ENCODE measurements at regions of chr1 and their contacts with region 1.

Region 1: GRCh38 chr1:43171876-43172526 is at the starts of genes CFAP57 and EBNA1BP2:
- DNase-seq: peak; percentile 93 to 95 (median 94)
- H3K4me3 ChIP-seq: peak within 1 kb of the TSS; percentile 81 to 87
- H3K4me3 Mint-ChIP-seq: peak within 1 kb of the TSS; percentile 94 to 100 (median 99)
- H3K27ac ChIP-seq: peak within 1 kb of the TSS; percentile 62
- H3K27ac Mint-ChIP-seq: peak within 1 kb of the TSS; percentile 84 to 99 (median 96)
- H3K4me1 ChIP-seq: peaks cover 21% of the 10 kb centered on the region
- H3K4me1 Mint-ChIP-seq: peaks cover 22 to 31% (median 26%) of the 10 kb centered on the region in 4 donors
- H3K27me3 ChIP-seq: peaks cover 10% of the 10 kb centered on the region
- H3K27me3 Mint-ChIP-seq: peaks cover 13 to 15% of the 10 kb centered on the region in 2 donors
- total RNA-seq, gene CFAP57: not detected
- total RNA-seq, gene EBNA1BP2: 23.6 to 27.6 TPM

Region 2: DNA sequence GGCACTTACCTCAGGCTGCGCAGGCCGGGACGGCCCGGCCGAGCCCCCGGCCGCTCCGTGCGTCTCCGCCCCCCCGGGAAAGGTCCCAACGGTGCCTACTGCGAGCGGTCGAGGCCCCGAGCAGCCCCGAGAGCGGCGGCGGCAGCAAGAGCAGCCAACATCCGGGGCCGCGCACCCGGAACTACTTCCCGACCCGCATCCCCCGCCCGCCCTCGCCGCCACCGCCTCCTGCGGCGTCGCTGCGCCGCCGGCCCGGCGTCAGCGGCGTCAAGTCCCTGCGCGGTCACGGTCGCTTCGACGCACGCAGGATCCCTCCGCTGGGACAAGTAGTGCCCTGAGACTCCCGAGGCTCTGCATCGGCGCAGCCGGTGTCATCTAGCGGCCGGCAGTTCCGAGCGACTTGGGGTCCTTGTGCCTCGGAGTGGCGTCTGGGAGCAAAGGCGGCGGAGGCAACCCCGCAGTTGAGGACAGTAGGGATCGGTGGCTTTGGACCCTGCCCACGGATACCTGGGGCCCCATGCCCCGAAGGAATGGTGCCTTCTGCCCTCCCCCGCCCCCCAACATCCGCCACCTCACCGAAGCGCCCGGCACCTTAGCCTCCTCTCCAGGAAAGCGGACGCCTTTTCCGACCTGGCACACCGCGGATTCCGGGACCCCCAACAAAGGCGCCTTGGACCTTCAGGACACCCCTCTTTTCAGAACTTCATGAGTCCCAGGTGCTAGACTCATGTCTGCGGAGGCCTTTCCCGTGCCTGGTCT is 836.8 kb before region 1 on chr1 and contains the start of gene FOXJ3:
- CTCF ChIA-PET with region 1: no interaction called
- POLR2A ChIA-PET with region 1: no interaction called
- intact Hi-C with region 1: loop called (anchors 10 kb)
- DNase-seq: peak; percentile 89 to 91 (median 90)
- H3K4me3 ChIP-seq: peak within 1 kb of the TSS; percentile 62 to 92
- H3K4me3 Mint-ChIP-seq: peak within 1 kb of the TSS; percentile 93 to 97 (median 95)
- H3K27ac ChIP-seq: peak within 1 kb of the TSS; percentile 83
- H3K27ac Mint-ChIP-seq: peak within 1 kb of the TSS; percentile 94 to 96 (median 95)
- H3K4me1 ChIP-seq: peaks cover 41% of the 10 kb centered on the region
- H3K4me1 Mint-ChIP-seq: peaks cover 33 to 54% (median 44%) of the 10 kb centered on the region in 4 donors
- H3K27me3 ChIP-seq: no peaks in the 10 kb centered on the region
- H3K27me3 Mint-ChIP-seq: no peaks in the 10 kb centered on the region
- total RNA-seq, gene FOXJ3: 97.4 to 102 TPM

Region 3: GRCh38 chr1:42657971-42658879 is 513.8 kb before region 1 on chr1 and contains the start of gene PPIH:
- CTCF ChIA-PET with region 1: no interaction called
- POLR2A ChIA-PET with region 1: no interaction called
- intact Hi-C with region 1: loop called (anchors 1 kb)
- DNase-seq: peak; percentile 92 to 96 (median 93)
- H3K4me3 ChIP-seq: peak within 1 kb of the TSS; percentile 81 to 89
- H3K4me3 Mint-ChIP-seq: peak within 1 kb of the TSS; percentile 94 to 100 (median 98)
- H3K27ac ChIP-seq: peak within 1 kb of the TSS; percentile 65
- H3K27ac Mint-ChIP-seq: peak within 1 kb of the TSS; percentile 94 to 98 (median 95)
- H3K4me1 ChIP-seq: peaks cover 26% of the 10 kb centered on the region
- H3K4me1 Mint-ChIP-seq: peaks cover 21 to 47% (median 35%) of the 10 kb centered on the region in 4 donors
- H3K27me3 ChIP-seq: no peaks in the 10 kb centered on the region
- H3K27me3 Mint-ChIP-seq: no peaks in the 10 kb centered on the region
- total RNA-seq, gene PPIH: 40.5 to 42.9 TPM

Region 4: GRCh38 chr1:42846257-42847110 is 325.5 kb before region 1 on chr1 and contains the start of gene ZNF691:
- CTCF ChIA-PET with region 1: no interaction called
- POLR2A ChIA-PET with region 1: no interaction called
- intact Hi-C with region 1: loop called (anchors 1 kb)
- DNase-seq: peak; percentile 88 to 94 (median 89)
- H3K4me3 ChIP-seq: peak within 1 kb of the TSS; percentile 74 to 84
- H3K4me3 Mint-ChIP-seq: peak within 1 kb of the TSS; percentile 91 to 98 (median 96)
- H3K27ac ChIP-seq: peak within 1 kb of the TSS; percentile 72
- H3K27ac Mint-ChIP-seq: peak within 1 kb of the TSS; percentile 59 to 95 (median 86)
- H3K4me1 ChIP-seq: peaks cover 23% of the 10 kb centered on the region
- H3K4me1 Mint-ChIP-seq: peaks cover 27 to 38% (median 35%) of the 10 kb centered on the region in 4 donors
- H3K27me3 ChIP-seq: no peaks in the 10 kb centered on the region
- H3K27me3 Mint-ChIP-seq: no peaks in the 10 kb centered on the region
- total RNA-seq, gene ZNF691: 17.3 to 18.8 TPM

Region 5: DNA sequence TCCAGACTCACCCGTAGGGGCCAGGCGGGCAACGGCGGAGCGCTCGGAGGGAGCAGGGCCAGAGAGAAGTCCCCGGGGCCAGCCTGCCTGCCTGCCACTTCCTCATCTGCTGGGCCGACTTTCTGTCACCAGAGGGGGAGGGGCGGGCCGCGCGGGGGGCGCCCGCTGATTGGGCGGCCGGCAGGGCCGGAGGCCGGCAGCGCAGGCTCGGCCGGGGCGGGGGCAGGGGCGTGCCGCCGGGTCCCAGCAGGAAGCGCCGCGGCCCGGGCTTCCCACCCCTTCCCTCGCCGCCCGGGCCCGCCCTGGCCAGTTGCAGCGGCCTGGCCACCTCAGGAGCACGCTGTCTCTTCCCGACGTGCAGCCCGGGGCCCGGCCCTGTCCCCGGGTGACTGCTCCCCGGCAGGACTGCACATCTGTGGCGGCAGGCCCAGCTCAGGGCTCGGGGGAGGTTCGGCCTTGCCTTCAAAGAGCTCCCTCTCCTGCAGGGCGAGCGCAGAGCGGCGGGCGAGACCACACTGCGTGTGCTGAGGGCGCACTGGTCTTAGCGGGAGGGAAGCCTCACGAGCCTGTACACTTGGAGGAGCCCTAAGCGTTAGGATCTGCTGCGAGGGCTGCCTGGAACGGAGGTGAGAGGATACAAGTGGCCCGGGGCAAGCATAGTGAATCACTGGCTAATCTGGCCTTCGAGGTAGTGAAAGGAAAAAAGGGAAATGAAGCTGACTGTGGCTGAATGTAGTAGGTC is 196.1 kb after region 1 on chr1 and contains the start of gene ELOVL1:
- CTCF ChIA-PET with region 1: no interaction called
- POLR2A ChIA-PET with region 1: interaction called, 4 read pairs
- intact Hi-C with region 1: loop called (anchors 1 kb)
- DNase-seq: peak; percentile 70 to 82 (median 74)
- H3K4me3 ChIP-seq: peak within 1 kb of the TSS; percentile 68 to 76
- H3K4me3 Mint-ChIP-seq: peak within 1 kb of the TSS; percentile 87 to 94 (median 90)
- H3K27ac ChIP-seq: peak within 1 kb of the TSS; percentile 81
- H3K27ac Mint-ChIP-seq: peak within 1 kb of the TSS; percentile 87 to 96 (median 93)
- H3K4me1 ChIP-seq: peaks cover 24% of the 10 kb centered on the region
- H3K4me1 Mint-ChIP-seq: peaks cover 25 to 51% (median 38%) of the 10 kb centered on the region in 4 donors
- H3K27me3 ChIP-seq: no peaks in the 10 kb centered on the region
- H3K27me3 Mint-ChIP-seq: no peaks in the 10 kb centered on the region
- total RNA-seq, gene ELOVL1: 45.3 to 46.0 TPM

Region 6: DNA sequence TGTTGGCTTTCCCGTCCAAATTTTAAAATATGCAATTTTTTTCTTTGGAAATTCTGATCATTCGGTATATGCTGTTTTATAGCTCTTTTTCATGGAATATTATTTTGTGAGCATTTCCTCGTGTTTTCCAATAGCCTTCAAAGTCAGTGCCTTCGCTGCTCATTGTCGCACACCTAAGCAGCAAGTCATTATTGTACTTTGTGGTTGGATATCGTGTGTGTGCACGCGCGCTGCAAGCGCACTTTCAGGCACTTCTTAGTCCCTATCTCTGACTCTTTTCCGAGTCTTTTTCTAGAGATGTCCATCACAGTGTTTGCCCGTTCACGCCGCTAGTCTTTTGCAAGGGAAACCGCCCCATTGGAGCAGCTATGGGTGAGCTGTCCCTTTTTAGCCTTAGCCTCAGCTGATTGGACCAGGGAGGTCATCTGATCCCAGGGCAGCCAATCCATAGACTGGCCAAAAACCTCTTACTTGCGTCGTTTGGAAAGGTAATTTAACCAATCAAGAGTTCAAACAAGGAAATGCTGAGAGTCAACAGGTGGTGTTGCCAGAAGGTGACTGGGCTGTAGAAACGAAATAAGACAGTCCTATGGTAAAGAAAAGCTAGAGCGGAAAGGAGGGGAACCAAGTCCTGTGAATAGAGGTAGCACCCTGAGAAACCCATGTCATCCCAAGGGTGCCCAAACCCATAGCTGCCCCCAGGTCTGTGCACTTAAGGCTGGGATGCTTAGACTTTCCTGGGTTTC is 282.4 kb after region 1 on chr1:
- CTCF ChIA-PET with region 1: no interaction called
- POLR2A ChIA-PET with region 1: interaction called, 6 read pairs
- intact Hi-C with region 1: loop called (anchors 5 kb)
- DNase-seq: peak; percentile 65 to 78 (median 68)
- H3K4me3 ChIP-seq: peak overlapping the region; percentile 10 to 36
- H3K4me3 Mint-ChIP-seq: peak overlapping the region; percentile 88 to 92 (median 89)
- H3K27ac ChIP-seq: peak overlapping the region; percentile 4
- H3K27ac Mint-ChIP-seq: peak overlapping the region; percentile 70 to 93 (median 89)
- H3K4me1 ChIP-seq: peaks cover 12% of the 10 kb centered on the region
- H3K4me1 Mint-ChIP-seq: peaks cover 12 to 29% (median 21%) of the 10 kb centered on the region in 4 donors
- H3K27me3 ChIP-seq: no peaks in the 10 kb centered on the region
- H3K27me3 Mint-ChIP-seq: peaks cover 0 to 4% of the 10 kb centered on the region in 2 donors